Heart right ventricle (tissue), 16 donors: ENCODE measurements at regions of chr16 and their contacts with region 1.

Region 1: GRCh38 chr16:87815567-87815966 is 49.8 kb upstream of the KLHDC4 start:
- DNase-seq: no peak
- ATAC-seq: no peak
- H3K4me3 ChIP-seq: no peak overlapping the region
- H3K27ac ChIP-seq: no peak overlapping the region
- H3K4me1 ChIP-seq: peaks cover 0 to 4% (median 0%) of the 10 kb centered on the region in 9 donors
- H3K27me3 ChIP-seq: peaks cover 0 to under 1% (median 0%) of the 10 kb centered on the region in 7 donors
- CTCF ChIP-seq: no peak

Region 2: DNA sequence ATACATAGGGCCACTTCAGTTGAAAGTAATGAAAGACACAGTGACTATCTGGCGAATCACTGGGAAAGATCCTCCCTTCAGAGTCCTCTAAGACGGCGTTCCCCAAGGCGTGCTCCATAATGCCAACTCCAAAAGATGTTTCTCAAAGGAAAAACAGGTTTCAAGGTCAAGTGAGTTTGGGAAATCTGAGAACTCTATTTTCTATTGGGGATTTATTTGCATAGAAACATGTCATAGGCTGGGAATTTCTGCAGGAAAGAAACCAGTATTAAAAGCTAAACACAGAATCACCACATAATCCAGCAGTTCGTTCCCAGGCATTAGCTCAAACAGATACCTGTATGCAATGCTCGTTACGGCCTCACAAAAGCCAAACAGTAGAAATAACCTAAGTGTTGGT is 57.7 kb before region 1 on chr16:
- intact Hi-C with region 1: no loop called
- DNase-seq: no peak
- ATAC-seq: no peak
- H3K4me3 ChIP-seq: no peak overlapping the region
- H3K27ac ChIP-seq: no peak overlapping the region
- H3K4me1 ChIP-seq: no peaks in the 10 kb centered on the region
- H3K27me3 ChIP-seq: no peaks in the 10 kb centered on the region
- CTCF ChIP-seq: no peak

Region 3: GRCh38 chr16:87804198-87804597 is 11.4 kb before region 1 on chr16:
- intact Hi-C with region 1: loop called in 1 of 10 experiments (anchors 1 kb)
- DNase-seq: no peak
- ATAC-seq: no peak
- H3K4me3 ChIP-seq: no peak overlapping the region
- H3K27ac ChIP-seq: no peak overlapping the region
- H3K4me1 ChIP-seq: peaks cover 0 to 19% (median 14%) of the 10 kb centered on the region in 9 donors
- H3K27me3 ChIP-seq: peaks cover 0 to 8% (median 0%) of the 10 kb centered on the region in 7 donors
- CTCF ChIP-seq: no peak